ENCODE measurements at regions of chr16 and their contacts with region 1.

Region 1: DNA sequence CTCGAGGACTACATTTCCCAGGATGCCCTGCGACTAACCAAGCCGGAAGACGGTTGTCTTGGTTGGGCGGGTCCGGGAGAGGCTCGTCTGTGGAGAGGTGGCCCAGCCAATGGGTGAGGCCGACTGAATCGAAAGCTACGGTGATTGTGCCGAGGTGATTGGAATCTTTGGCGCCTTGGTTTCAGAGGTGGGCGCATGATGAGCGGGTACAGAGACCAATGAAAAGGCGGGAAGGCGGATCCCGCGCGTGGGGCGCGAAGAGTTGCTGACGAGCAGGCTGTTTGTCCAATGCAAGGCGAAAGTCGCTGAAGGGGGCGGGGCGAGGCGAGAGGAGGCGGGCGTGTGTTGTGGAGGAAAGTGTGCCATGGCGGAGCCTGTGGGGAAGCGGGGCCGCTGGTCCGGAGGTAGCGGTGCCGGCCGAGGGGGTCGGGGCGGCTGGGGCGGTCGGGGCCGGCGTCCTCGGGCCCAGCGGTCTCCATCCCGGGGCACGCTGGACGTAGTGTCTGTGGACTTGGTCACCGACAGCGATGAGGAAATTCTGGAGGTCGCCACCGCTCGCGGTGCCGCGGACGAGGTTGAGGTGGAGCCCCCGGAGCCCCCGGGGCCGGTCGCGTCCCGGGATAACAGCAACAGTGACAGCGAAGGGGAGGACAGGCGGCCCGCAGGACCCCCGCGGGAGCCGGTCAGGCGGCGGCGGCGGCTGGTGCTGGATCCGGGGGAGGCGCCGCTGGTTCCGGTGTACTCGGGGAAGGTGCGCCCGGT is at the start of gene NFATC2IP:
- DNase-seq: peak; percentile 100
- ATAC-seq: peak; percentile 98
- H3K4me3 Mint-ChIP-seq: peak within 1 kb of the TSS; percentile 97
- H3K27ac Mint-ChIP-seq: peak within 1 kb of the TSS; percentile 98
- H3K4me1 Mint-ChIP-seq: peaks cover 32% of the 10 kb centered on the region
- H3K27me3 Mint-ChIP-seq: peaks cover 7% of the 10 kb centered on the region
- total RNA-seq, gene NFATC2IP: 113 to 120 TPM

Region 2: GRCh38 chr16:28863929-28864793 is 86.7 kb before region 1 on chr16:
- CTCF ChIA-PET with region 1: interaction called, 30 read pairs
- POLR2A ChIA-PET with region 1: interaction called, 6 read pairs
- DNase-seq: peak; percentile 36
- ATAC-seq: peak; percentile 2
- H3K4me3 Mint-ChIP-seq: peak overlapping the region; percentile 97
- H3K27ac Mint-ChIP-seq: peak overlapping the region; percentile 96
- H3K4me1 Mint-ChIP-seq: peaks cover 31% of the 10 kb centered on the region
- H3K27me3 Mint-ChIP-seq: no peaks in the 10 kb centered on the region

Region 3: DNA sequence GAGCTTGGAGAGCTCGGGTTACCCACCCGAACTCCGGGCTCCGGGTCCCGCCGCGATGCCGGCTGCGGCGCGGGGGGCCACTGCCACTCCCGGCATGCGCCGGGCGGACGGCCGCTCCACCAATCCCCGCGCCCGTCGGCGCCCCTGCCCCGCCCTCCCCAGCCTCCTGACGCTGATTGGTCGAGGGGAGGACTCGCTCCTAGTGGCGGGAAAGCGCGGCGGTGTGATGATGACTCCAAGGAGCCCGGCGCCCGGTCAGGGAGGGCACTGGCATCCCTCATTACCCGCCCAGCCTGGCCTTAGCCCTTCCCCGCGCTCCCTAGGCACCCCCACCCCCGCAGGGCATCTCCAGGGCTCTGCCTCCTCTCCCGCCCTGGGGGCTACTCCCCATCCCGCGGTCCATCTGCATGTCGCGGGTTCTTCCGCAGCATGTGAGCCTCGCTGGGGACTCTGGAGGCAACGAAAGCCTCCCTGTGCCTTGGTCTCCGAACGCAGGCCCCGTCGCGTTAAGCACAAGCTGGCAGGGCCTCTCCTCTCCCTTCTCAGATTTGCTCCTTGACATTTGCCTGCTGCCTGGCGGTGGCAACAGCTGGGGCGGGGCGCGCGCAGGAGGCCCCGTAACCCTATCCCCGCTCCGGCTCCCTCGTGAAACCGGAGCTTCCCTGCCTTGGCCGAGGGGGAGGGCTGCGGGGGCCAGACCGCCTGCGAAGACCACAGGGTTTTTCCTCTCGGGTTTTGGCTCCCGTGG is 70.8 kb before region 1 on chr16:
- CTCF ChIA-PET with region 1: interaction called, 45 read pairs
- POLR2A ChIA-PET with region 1: interaction called, 3 read pairs
- DNase-seq: peak; percentile 94
- ATAC-seq: peak; percentile 97
- H3K4me3 Mint-ChIP-seq: peak overlapping the region; percentile 93
- H3K27ac Mint-ChIP-seq: peak overlapping the region; percentile 83
- H3K4me1 Mint-ChIP-seq: peaks cover 38% of the 10 kb centered on the region
- H3K27me3 Mint-ChIP-seq: peaks cover 6% of the 10 kb centered on the region

Region 4: DNA sequence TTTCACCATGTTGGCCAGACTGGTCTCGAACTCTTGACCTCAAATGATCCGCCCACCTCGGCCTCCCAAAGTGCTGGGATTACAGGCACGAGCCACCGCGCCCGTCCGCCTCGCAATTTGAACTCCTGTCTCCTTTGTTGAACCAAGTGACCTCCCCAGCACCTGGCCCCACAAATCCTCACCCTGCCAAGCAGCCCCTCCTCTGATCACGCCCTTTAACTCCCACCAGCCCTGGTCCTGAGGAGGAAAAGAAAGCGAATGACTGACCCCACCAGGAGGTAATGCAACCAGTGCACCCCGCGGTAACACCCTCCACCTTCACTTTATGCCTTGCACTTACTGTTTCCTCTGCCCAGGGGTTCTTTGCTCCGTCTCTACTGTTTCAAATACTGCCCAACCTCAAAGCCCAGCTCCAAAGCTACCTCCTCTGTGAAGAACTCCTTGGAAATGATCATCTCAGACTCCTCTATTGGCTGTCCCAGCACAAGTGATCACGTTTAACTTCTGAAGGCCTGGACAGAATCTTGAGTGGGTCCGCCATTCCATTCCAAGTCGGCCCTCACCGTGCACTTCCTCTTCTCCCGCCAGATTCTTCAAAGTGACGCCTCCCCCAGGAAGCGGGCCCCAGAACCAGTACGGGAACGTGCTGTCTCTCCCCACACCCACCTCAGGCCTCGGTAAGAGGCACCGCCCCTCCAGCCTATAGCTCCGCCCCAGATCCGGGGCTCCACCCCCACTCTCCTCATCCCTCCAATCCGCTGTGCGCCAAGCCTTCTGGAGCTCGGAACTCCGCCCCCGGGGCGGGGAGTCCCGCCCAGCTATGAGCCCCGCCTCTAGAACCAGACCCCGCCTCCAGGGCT is 14.7 kb before region 1 on chr16:
- CTCF ChIA-PET with region 1: interaction called, 49 read pairs
- POLR2A ChIA-PET with region 1: no interaction called
- DNase-seq: peak; percentile 88
- ATAC-seq: peak; percentile 99
- H3K4me3 Mint-ChIP-seq: peak overlapping the region; percentile 60
- H3K27ac Mint-ChIP-seq: peak overlapping the region; percentile 23
- H3K4me1 Mint-ChIP-seq: peaks cover 26% of the 10 kb centered on the region
- H3K27me3 Mint-ChIP-seq: no peaks in the 10 kb centered on the region

Region 5: DNA sequence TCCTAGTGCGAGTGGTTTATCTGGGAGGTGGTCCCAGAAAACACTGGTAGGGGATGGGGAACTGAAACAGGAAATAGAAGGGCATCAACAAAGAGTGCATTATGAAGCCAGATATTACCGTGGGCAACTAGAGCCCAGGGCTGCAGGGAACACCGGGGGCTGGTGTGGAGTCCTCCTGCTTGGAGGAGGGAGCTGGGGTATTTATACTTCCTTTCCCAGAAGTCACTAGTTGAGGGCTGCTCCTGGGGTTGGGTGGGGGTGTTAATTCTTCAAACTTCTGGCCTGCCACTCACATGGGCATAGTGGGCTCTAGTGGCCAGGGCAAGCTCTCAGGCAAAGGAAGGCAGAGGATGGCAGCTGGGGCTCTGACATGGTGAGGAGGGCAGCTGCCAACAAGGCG is 48.7 kb after region 1 on chr16:
- CTCF ChIA-PET with region 1: no interaction called
- POLR2A ChIA-PET with region 1: no interaction called
- DNase-seq: no peak
- ATAC-seq: no peak
- H3K4me3 Mint-ChIP-seq: no peak overlapping the region
- H3K27ac Mint-ChIP-seq: no peak overlapping the region
- H3K4me1 Mint-ChIP-seq: peaks cover 10% of the 10 kb centered on the region
- H3K27me3 Mint-ChIP-seq: no peaks in the 10 kb centered on the region